GM12878 (cell line): ENCODE measurements at regions of chr2 and their contacts with region 1.

Region 1: GRCh38 chr2:112173646-112174319 is 35.6 kb downstream of the FBLN7 start:
- DNase-seq: no peak
- ATAC-seq: no peak
- H3K4me3 ChIP-seq: no peak overlapping the region
- H3K27ac ChIP-seq: no peak overlapping the region
- H3K4me1 ChIP-seq: no peaks in the 10 kb centered on the region
- H3K27me3 ChIP-seq: no peaks in the 10 kb centered on the region
- CTCF ChIP-seq: no peak
- EP300 ChIP-seq: no peak
- POLR2A ChIP-seq: no peak
- RAD21 ChIP-seq: no peak

Region 2: GRCh38 chr2:112121682-112122254 is 52.0 kb before region 1 on chr2:
- CTCF ChIA-PET with region 1: no interaction called
- POLR2A ChIA-PET with region 1: no interaction called
- RAD21 ChIA-PET with region 1: no interaction called
- SMC1A ChIA-PET with region 1: no interaction called
- in situ Hi-C with region 1: no loop called
- intact Hi-C with region 1: loop called (anchors 5 kb)
- DNase-seq: no peak
- ATAC-seq: no peak
- H3K4me3 ChIP-seq: no peak overlapping the region
- H3K27ac ChIP-seq: no peak overlapping the region
- H3K4me1 ChIP-seq: no peaks in the 10 kb centered on the region
- H3K27me3 ChIP-seq: no peaks in the 10 kb centered on the region
- CTCF ChIP-seq: peak; percentile 38 to 55 (median 41); a peak in 5 of 6 replicates
- EP300 ChIP-seq: no peak
- POLR2A ChIP-seq: no peak
- RAD21 ChIP-seq: peak; percentile 59